ENCODE measurements at regions of chr20 and their contacts with region 1.

Region 1: GRCh38 chr20:8918145-8918544 is 150.7 kb upstream of the PLCB4 start:
- DNase-seq: no peak
- H3K4me3 ChIP-seq: no peak overlapping the region
- H3K27me3 ChIP-seq: no peaks in the 10 kb centered on the region
- CTCF ChIP-seq: no peak

Region 2: DNA sequence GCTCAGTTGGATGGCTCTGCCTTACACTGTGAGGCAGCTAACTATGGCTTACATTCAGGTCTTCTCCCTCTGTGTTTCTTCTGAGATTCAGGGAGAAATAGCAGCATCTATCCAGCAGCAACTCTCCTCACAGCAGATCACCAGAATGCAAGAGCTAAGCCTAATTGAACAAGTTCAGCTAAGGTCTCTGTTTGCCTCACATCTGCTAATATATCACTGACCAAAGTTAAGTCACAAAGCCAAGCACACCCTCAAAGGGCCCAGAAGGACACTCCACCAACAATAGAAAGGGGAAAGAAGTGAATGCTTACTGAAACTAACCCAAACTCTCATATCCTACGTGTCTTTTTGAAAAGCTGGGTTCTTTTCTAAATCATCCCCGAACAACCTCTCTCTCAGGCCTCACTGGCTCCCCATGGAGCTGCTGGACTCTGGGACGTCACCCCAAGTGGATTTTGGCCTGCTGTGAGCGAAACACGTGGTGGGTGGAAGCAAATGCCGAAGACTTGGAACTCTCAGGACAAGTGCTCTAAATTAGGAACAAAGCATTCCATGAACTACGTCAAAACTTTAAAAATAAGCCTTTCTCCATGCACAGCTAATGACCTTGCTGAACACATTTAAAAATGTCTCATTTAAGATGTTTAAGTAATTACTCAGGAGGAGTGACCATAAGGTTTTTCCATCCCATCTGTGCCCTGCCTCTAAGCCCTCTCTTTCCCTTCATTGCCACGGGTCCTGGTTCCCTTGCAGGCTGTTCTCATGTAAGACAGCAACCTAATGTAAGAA is 16.7 kb before region 1 on chr20:
- CTCF ChIA-PET with region 1: no interaction called
- POLR2A ChIA-PET with region 1: no interaction called
- DNase-seq: peak; percentile 21
- H3K4me3 ChIP-seq: no peak overlapping the region
- H3K27me3 ChIP-seq: no peaks in the 10 kb centered on the region
- CTCF ChIP-seq: no peak

Region 3: DNA sequence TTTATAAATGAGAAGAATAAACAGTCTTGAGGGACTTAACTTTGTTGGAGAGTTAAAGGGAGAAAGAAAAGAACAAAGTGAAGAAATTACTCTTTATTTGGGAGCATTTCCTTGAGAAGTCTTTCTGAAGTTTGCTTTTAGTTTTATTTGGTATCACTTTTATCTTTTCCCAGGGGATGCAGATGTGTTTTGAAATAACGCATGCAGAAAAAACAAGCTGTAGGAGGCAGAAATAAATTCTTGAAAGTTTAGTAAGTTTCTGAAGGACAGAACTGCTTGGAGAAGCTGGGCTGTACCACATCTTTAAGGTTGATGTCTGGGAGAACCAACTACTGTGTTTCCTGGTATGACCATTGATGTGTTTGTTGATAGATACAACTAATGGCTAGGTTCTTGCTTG is 225.8 kb after region 1 on chr20:
- CTCF ChIA-PET with region 1: no interaction called
- POLR2A ChIA-PET with region 1: interaction called, 10 read pairs
- DNase-seq: no peak
- H3K4me3 ChIP-seq: no peak overlapping the region
- H3K27me3 ChIP-seq: no peaks in the 10 kb centered on the region
- CTCF ChIP-seq: no peak